OCI-LY7 (cell line): ENCODE measurements at regions of chrX and their contacts with region 1.

Region 1: GRCh38 chrX:75038925-75039324 is 113.7 kb upstream of the NEXMIF start:
- DNase-seq: peak; percentile 37
- H3K4me3 ChIP-seq: no peak overlapping the region
- H3K27ac ChIP-seq: no peak overlapping the region
- H3K4me1 ChIP-seq: no peaks in the 10 kb centered on the region
- CTCF ChIP-seq: peak; percentile 72

Region 2: DNA sequence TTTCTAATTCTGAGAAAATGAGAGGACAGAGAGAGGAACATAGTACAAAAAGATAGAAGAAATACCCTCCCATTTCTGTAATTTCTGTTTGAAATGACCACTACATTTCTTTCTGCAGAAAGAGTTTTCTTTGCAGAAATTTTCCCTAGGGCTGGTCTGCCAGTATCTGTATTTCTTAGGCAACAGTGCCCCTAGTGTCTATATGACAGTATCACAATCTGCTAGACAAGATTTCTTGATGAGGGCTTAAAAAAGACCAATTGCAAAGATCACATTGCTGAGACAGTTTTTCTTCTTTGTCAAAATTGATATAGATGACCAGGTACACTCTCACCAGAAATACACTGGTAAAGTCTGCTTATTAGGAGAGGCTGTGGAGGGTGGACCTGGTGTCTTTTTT is 564.9 kb after region 1 on chrX:
- CTCF ChIA-PET with region 1: no interaction called
- POLR2A ChIA-PET with region 1: no interaction called
- intact Hi-C with region 1: loop called (anchors 10 kb)
- DNase-seq: peak; percentile 43
- H3K4me3 ChIP-seq: no peak overlapping the region
- H3K27ac ChIP-seq: no peak overlapping the region
- H3K4me1 ChIP-seq: no peaks in the 10 kb centered on the region
- CTCF ChIP-seq: peak; percentile 72